ENCODE measurements at regions of chr20 and their contacts with region 1.

Region 1: DNA sequence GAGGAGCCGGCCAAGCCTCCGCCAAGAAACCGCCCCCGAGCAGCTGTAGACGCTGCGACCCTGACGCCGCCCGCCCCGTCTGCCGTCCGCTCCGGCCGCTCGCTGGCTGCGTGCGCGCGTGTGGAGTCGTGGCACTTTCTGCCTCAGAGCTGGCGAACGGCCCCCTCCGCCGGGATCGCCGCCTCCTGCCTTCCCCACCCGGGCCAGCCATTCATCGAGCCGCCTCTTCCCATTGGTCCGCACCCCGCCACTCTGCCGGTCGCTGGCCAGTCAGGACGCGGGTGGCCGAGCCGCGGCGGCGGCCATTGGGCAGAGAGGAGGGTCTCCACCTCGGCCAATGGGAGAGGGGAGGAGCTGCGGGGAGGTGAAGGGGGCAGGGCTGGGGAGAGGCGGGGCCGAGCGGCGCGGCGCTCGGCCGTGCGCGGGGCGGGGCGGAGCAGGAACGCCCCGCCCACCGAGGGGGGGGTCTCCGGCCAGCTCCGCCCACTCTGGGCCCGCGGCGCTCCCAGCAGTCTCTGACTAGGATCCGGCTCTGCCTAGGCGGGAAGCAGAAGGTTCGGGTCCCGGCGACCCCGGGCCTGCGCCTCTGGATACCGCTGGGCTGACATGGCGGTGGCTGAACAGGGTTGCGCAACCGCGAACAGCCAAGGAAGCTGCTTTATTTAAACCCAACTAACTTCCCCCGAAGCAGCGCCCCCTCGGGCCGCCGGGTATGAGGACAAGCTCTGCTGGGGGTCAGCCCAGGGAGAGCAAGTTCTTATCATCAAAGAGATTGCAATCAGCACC is at the start of gene RRBP1:
- DNase-seq: peak; percentile 94
- H3K4me3 ChIP-seq: peak within 1 kb of the TSS; percentile 79
- H3K27ac ChIP-seq: peak within 1 kb of the TSS; percentile 89
- H3K27me3 ChIP-seq: peaks cover 5% of the 10 kb centered on the region
- CTCF ChIP-seq: peak; percentile 77
- polyA plus RNA-seq, gene RRBP1: 151 and 153 TPM in 2 replicates

Region 2: DNA sequence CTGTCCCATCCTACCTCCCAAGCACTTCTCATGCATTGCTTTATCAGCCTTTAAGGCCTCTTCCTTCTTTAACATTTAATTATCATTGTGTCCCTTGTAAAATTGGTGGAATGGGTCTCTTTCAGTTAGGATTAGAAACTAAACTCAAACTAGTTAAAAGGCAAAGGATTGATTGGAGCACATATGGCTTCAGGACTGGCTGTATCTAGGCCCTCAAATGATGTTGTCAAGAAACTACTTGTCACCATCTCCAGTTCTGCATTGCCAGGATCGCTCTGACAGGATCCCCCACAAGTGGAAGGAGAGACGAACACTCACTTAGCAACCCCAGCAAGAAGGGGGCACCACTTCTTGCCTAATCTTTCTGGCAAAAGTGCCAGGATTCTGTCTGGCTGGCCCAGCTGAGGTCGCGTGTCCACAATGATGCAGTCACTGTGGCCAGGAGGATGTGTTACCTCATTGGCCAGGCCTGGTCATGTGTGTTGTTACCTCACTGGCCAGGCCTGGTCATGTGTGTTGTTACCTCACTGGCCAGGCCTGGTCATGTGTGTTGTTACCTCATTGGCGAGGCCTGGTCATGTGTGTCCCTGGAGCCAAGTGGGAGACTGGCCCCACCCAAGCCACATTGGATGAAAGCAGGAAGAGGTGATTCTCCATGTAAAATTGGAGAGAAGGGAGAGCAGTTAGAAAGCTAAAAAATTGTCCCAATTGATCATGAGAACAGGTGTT is 22.5 kb after region 1 on chr20:
- CTCF ChIA-PET with region 1: interaction called, 10 read pairs
- POLR2A ChIA-PET with region 1: interaction called, 8 read pairs
- DNase-seq: no peak
- H3K4me3 ChIP-seq: no peak overlapping the region
- H3K27ac ChIP-seq: no peak overlapping the region
- H3K27me3 ChIP-seq: no peaks in the 10 kb centered on the region
- CTCF ChIP-seq: no peak

Region 3: GRCh38 chr20:17796091-17796563 is 113.8 kb after region 1 on chr20:
- CTCF ChIA-PET with region 1: interaction called, 7 read pairs
- POLR2A ChIA-PET with region 1: interaction called, 11 read pairs
- DNase-seq: no peak
- H3K4me3 ChIP-seq: no peak overlapping the region
- H3K27ac ChIP-seq: no peak overlapping the region
- H3K27me3 ChIP-seq: peaks cover 2% of the 10 kb centered on the region
- CTCF ChIP-seq: no peak

Region 4: DNA sequence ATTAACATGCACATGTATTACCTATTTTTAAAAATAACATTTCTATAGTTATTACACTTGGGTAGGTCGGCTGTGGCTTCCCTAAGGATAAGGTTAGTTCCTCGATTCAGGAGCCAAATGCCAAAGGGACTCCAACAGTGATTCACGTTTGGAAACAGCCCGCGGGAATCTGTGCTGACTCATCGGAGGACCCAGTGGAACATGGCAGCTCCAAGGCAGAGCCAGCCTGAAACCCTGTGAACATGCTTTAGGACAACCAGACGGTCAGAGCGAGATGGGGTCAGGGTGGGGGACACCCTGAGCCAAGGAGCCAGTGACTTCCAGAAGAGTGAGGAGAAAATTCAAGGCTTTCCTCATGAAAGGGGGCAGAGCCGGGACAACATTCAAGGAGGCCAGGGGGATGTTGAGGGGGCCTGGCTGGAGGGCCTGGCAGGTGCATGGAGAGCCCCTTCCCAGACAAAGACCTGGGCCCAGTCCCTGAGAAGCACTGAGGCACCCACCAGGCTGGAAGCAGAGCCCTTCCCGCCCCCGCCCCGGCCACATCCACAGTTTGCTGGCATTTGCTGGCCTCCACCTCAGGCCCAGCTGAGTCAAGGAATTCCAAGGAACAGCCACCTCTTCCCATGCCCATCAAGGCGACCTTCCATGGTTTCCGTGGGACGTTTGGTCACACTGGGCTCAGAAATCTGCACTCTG is 153.1 kb after region 1 on chr20:
- CTCF ChIA-PET with region 1: interaction called, 5 read pairs
- POLR2A ChIA-PET with region 1: interaction called, 19 read pairs
- DNase-seq: no peak
- H3K4me3 ChIP-seq: no peak overlapping the region
- H3K27ac ChIP-seq: peak overlapping the region; percentile 95
- H3K27me3 ChIP-seq: no peaks in the 10 kb centered on the region
- CTCF ChIP-seq: no peak

Region 5: GRCh38 chr20:17873410-17874270 is 191.3 kb after region 1 on chr20:
- CTCF ChIA-PET with region 1: interaction called, 4 read pairs
- POLR2A ChIA-PET with region 1: interaction called, 53 read pairs
- DNase-seq: peak; percentile 96
- H3K4me3 ChIP-seq: peak overlapping the region; percentile 20
- H3K27ac ChIP-seq: peak overlapping the region; percentile 93
- H3K27me3 ChIP-seq: no peaks in the 10 kb centered on the region
- CTCF ChIP-seq: no peak

Region 6: DNA sequence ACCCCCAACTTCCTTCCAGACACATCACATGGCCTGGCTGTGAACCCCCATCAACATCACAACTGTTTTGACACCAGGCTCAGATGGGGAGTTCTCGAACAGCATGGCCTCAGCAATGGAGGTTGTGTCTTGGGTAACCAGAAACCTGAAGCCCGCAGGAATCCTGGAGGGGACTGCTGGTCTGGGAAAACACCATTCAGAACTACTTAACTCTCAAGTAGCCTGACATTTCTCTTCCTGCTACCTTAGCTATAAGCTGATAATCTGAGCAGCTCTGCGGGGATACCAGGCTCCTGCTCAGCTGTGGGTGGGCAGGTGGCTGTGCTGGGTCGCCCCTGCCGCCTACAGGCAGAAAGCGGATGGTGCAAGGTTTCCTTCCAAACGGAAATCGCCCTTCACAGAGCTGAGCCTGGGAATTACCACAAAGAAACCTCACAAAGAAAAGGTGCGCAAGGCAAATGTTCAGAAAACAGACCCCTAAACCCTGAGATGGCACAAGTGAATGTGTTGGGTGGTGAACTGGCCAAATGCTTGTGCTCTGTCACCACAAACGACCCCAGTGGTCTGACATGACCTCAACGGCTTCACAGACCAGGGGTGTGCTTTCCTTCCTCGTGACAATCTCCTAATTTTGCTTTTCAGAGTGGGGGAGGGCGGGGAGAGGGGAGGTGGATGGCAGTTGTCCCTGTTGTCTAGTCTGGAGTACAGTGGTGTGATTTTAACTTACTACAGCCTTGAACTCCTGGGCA is 256.7 kb after region 1 on chr20:
- CTCF ChIA-PET with region 1: interaction called, 12 read pairs
- POLR2A ChIA-PET with region 1: interaction called, 29 read pairs
- DNase-seq: no peak
- H3K4me3 ChIP-seq: no peak overlapping the region
- H3K27ac ChIP-seq: peak overlapping the region; percentile 21
- H3K27me3 ChIP-seq: no peaks in the 10 kb centered on the region
- CTCF ChIP-seq: peak; percentile 98

Measured in AG04450 (cell line).